WTC11 (cell line): ENCODE measurements at regions of chr4 and their contacts with region 1.

Region 1: DNA sequence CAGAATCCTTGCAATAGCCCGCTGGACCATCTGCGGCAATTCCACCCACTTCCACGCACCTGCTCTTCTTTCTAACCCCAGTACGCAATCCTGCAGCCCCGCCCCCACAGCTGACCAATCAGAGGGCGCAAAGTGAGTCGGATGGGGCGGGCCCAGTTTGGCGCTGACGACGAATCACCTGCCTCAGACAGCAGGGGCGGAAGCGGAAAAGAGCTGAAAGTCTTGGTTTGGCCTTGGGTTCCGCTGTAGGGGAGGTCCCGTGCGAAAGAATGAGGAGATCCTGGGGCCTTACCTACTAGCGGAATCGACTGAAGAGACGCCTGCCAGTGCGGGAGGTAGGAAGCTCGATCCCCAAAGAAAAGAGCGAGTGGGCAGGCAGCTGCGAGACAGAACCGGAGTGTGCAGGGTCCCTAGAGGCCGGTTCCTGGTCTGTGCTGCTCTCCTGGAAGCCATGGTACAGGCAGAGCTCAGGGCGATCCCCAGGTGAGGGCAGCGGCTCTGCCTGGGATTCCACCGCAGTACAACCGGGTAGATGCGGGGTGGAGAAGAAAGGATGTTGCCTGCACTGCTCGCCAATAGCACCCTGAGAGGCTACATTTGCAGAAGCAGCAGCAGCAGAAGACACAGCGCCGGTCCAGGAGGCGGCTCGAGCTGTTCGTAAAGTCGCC is at the start of gene TMEM184C:
- DNase-seq: peak; percentile 98
- ATAC-seq: peak; percentile 98
- H3K4me3 Mint-ChIP-seq: peak within 1 kb of the TSS; percentile 97
- H3K27ac Mint-ChIP-seq: peak within 1 kb of the TSS; percentile 98
- H3K4me1 Mint-ChIP-seq: peaks cover 20% of the 10 kb centered on the region
- H3K27me3 Mint-ChIP-seq: no peaks in the 10 kb centered on the region; the same call in 1 of the 2 replicates
- CTCF ChIP-seq: no peak
- total RNA-seq, gene TMEM184C: 42.3 to 43.7 TPM (median 43.4 TPM) in 3 replicates

Region 2: GRCh38 chr4:147182041-147182440 is 435.3 kb before region 1 on chr4:
- CTCF ChIA-PET with region 1: no interaction called
- POLR2A ChIA-PET with region 1: no interaction called
- DNase-seq: no peak
- ATAC-seq: no peak
- H3K4me3 Mint-ChIP-seq: no peak overlapping the region
- H3K27ac Mint-ChIP-seq: no peak overlapping the region
- H3K4me1 Mint-ChIP-seq: peaks cover 4% of the 10 kb centered on the region
- H3K27me3 Mint-ChIP-seq: no peaks in the 10 kb centered on the region; the same call in 1 of the 2 replicates
- CTCF ChIP-seq: no peak

Region 3: DNA sequence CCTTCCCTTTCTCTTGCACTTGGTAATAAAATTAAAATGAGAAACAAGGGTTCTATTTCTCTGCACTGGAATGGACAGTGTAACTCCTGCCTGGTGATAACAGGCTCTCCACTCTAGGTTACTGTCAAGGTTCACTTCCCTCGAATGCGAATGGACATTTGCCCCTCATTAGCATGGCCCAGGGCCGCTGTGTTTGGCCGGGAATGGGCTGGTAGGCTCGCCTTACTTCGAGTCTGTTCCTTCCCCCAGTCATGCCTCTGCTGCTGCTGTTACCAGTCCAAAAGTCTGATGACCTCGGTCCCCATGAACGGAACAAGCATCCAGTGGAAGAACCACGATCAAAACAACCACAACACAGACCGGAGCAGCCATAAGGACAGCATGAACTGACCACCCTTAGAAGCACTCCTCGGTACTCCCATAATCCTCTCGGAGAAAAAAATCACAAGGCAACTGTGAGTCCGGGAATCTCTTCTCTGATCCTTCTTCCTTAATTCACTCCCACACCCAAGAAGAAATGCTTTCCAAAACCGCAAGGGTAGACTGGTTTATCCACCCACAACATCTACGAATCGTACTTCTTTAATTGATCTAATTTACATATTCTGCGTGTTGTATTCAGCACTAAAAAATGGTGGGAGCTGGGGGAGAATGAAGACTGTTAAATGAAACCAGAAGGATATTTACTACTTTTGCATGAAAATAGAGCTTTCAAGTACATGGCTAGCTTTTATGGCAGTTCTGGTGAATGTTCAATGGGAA is 74.9 kb before region 1 on chr4:
- CTCF ChIA-PET with region 1: no interaction called
- POLR2A ChIA-PET with region 1: no interaction called
- DNase-seq: peak; percentile 15
- ATAC-seq: peak; percentile 69
- H3K4me3 Mint-ChIP-seq: no peak overlapping the region
- H3K27ac Mint-ChIP-seq: no peak overlapping the region
- H3K4me1 Mint-ChIP-seq: peaks cover 11% of the 10 kb centered on the region
- H3K27me3 Mint-ChIP-seq: no peaks in the 10 kb centered on the region
- CTCF ChIP-seq: no peak

Region 4: GRCh38 chr4:147651563-147651962 is 34.3 kb after region 1 on chr4:
- CTCF ChIA-PET with region 1: no interaction called
- POLR2A ChIA-PET with region 1: no interaction called
- DNase-seq: no peak
- ATAC-seq: no peak
- H3K4me3 Mint-ChIP-seq: no peak overlapping the region
- H3K27ac Mint-ChIP-seq: no peak overlapping the region
- H3K4me1 Mint-ChIP-seq: peaks cover 20% of the 10 kb centered on the region
- H3K27me3 Mint-ChIP-seq: no peaks in the 10 kb centered on the region
- CTCF ChIP-seq: no peak

Region 5: GRCh38 chr4:147683717-147684700 is 66.7 kb after region 1 on chr4 and contains the start of gene PRMT9:
- CTCF ChIA-PET with region 1: interaction called, 9 read pairs
- POLR2A ChIA-PET with region 1: interaction called, 17 read pairs
- DNase-seq: peak; percentile 83
- ATAC-seq: peak; percentile 93
- H3K4me3 Mint-ChIP-seq: peak within 1 kb of the TSS; percentile 84
- H3K27ac Mint-ChIP-seq: peak within 1 kb of the TSS; percentile 97
- H3K4me1 Mint-ChIP-seq: peaks cover 20% of the 10 kb centered on the region
- H3K27me3 Mint-ChIP-seq: peaks cover 4% of the 10 kb centered on the region; the same call in 1 of the 2 replicates
- CTCF ChIP-seq: no peak
- total RNA-seq, gene PRMT9: 9.5 to 11.4 TPM (median 10.4 TPM) in 3 replicates